ENCODE measurements at regions of chr9 and their contacts with region 1.

Region 1: GRCh38 chr9:22008736-22009562 is at the start of gene CDKN2B:
- DNase-seq: peak in 6 of 9 donors; percentile 30 to 82 (median 53)
- ATAC-seq: peak; percentile 90
- H3K4me3 ChIP-seq: peak within 1 kb of the TSS; percentile 57
- H3K4me3 Mint-ChIP-seq: peak within 1 kb of the TSS; percentile 46 to 86 (median 71)
- H3K27ac ChIP-seq: no peak within 1 kb of the TSS
- H3K27ac Mint-ChIP-seq: peak within 1 kb of the TSS in 2 of 9 donors; percentile 14 to 61
- H3K4me1 ChIP-seq: peaks cover 9 to 20% of the 10 kb centered on the region in 2 donors
- H3K4me1 Mint-ChIP-seq: peaks cover 17 to 32% (median 23%) of the 10 kb centered on the region in 7 donors
- H3K27me3 ChIP-seq: peaks cover 3 to 46% of the 10 kb centered on the region in 2 donors
- H3K27me3 Mint-ChIP-seq: peaks cover 67 to 84% (median 71%) of the 10 kb centered on the region in 5 donors
- total RNA-seq, gene CDKN2B: 0.32 to 4.1 (median 1.6) TPM in 3 of 5 experiments, not detected in the others

Region 2: DNA sequence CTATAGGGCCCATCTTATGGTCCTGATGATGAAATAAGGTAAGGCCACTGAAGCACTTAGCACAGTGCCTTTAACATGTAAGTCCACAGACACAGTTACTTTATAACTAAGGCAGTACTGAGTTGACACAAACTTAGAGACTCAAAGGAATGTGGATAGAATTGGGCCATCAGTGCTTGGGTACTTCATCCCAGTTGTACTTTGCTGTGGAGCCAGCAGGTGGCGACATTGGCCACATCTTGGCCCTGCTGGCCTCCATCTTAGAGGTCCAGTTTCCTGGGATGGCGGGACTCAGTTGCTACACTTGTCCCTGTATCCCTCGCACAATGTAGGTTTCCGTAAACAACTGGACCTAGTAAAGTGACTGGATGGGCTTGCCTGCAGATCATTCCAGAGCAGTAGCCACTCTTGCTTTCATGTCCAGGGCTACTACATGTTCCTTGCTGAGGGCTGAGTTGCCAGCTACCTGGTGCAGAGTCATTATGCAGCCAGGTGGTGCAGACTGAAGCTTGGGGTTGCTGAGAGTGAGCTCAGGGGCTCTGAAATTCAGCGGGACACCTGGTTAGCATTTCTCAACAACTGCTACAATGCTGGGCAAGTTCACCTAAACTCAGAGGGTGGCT is 195.9 kb before region 1 on chr9:
- CTCF ChIA-PET with region 1: interaction called, 48 read pairs
- POLR2A ChIA-PET with region 1: interaction called, 3 read pairs
- intact Hi-C with region 1: loop called (anchors 1 kb)
- DNase-seq: peak; percentile 11 to 69 (median 50)
- ATAC-seq: peak; percentile 82
- H3K4me3 ChIP-seq: no peak overlapping the region
- H3K4me3 Mint-ChIP-seq: no peak overlapping the region
- H3K27ac ChIP-seq: no peak overlapping the region
- H3K27ac Mint-ChIP-seq: peak overlapping the region in 4 of 9 donors; percentile 6 to 81 (median 64)
- H3K4me1 ChIP-seq: peaks cover 7 to 12% of the 10 kb centered on the region in 2 donors
- H3K4me1 Mint-ChIP-seq: peaks cover 6 to 40% (median 17%) of the 10 kb centered on the region in 7 donors
- H3K27me3 ChIP-seq: no peaks in the 10 kb centered on the region
- H3K27me3 Mint-ChIP-seq: no peaks in the 10 kb centered on the region

Region 3: GRCh38 chr9:21965401-21965951 is 43.5 kb before region 1 on chr9:
- CTCF ChIA-PET with region 1: no interaction called
- POLR2A ChIA-PET with region 1: no interaction called
- intact Hi-C with region 1: loop called (anchors 2 kb)
- DNase-seq: peak in 1 of 9 donors; percentile 53
- ATAC-seq: peak; percentile 75
- H3K4me3 ChIP-seq: peak overlapping the region; percentile 33
- H3K4me3 Mint-ChIP-seq: peak overlapping the region in 9 of 10 donors; percentile 1 to 81 (median 57)
- H3K27ac ChIP-seq: no peak overlapping the region
- H3K27ac Mint-ChIP-seq: peak overlapping the region in 5 of 9 donors; percentile 1 to 78 (median 61)
- H3K4me1 ChIP-seq: peaks cover 10 to 18% of the 10 kb centered on the region in 2 donors
- H3K4me1 Mint-ChIP-seq: peaks cover 9 to 35% (median 25%) of the 10 kb centered on the region in 7 donors
- H3K27me3 ChIP-seq: peaks cover 56 to 66% of the 10 kb centered on the region in 2 donors
- H3K27me3 Mint-ChIP-seq: peaks cover 89 to 94% (median 94%) of the 10 kb centered on the region in 5 donors

Region 4: GRCh38 chr9:22073349-22073748 is 64.4 kb after region 1 on chr9:
- CTCF ChIA-PET with region 1: no interaction called
- POLR2A ChIA-PET with region 1: no interaction called
- intact Hi-C with region 1: loop called in 1 of 2 experiments (anchors 2 kb)
- DNase-seq: no peak
- ATAC-seq: no peak
- H3K4me3 ChIP-seq: no peak overlapping the region
- H3K4me3 Mint-ChIP-seq: peak overlapping the region in 4 of 10 donors; percentile 15 to 63 (median 38)
- H3K27ac ChIP-seq: no peak overlapping the region
- H3K27ac Mint-ChIP-seq: peak overlapping the region in 3 of 9 donors; percentile 49 to 80 (median 53)
- H3K4me1 ChIP-seq: peaks cover 0 to 26% of the 10 kb centered on the region in 2 donors
- H3K4me1 Mint-ChIP-seq: peaks cover 15 to 57% (median 31%) of the 10 kb centered on the region in 7 donors
- H3K27me3 ChIP-seq: no peaks in the 10 kb centered on the region
- H3K27me3 Mint-ChIP-seq: peaks cover 0 to 44% (median 4%) of the 10 kb centered on the region in 5 donors

Region 5: GRCh38 chr9:22452415-22453010 is 443.6 kb after region 1 on chr9:
- CTCF ChIA-PET with region 1: interaction called, 4 read pairs
- POLR2A ChIA-PET with region 1: no interaction called
- intact Hi-C with region 1: loop called in 1 of 2 experiments (anchors 10 kb)
- DNase-seq: peak in 5 of 9 donors; percentile 8 to 31 (median 11)
- ATAC-seq: peak; percentile 70
- H3K4me3 ChIP-seq: no peak overlapping the region
- H3K4me3 Mint-ChIP-seq: no peak overlapping the region
- H3K27ac ChIP-seq: no peak overlapping the region
- H3K27ac Mint-ChIP-seq: no peak overlapping the region
- H3K4me1 ChIP-seq: no peaks in the 10 kb centered on the region
- H3K4me1 Mint-ChIP-seq: peaks cover 0 to 5% (median 2%) of the 10 kb centered on the region in 7 donors
- H3K27me3 ChIP-seq: peaks cover 6 to 10% of the 10 kb centered on the region in 2 donors
- H3K27me3 Mint-ChIP-seq: peaks cover 28 to 65% (median 37%) of the 10 kb centered on the region in 5 donors

Measured in naive thymus-derived CD4-positive, alpha-beta T cell (primary cell).